CD4-positive, alpha-beta memory T cell (primary cell): ENCODE measurements at regions of chr19 and their contacts with region 1.

Region 1: DNA sequence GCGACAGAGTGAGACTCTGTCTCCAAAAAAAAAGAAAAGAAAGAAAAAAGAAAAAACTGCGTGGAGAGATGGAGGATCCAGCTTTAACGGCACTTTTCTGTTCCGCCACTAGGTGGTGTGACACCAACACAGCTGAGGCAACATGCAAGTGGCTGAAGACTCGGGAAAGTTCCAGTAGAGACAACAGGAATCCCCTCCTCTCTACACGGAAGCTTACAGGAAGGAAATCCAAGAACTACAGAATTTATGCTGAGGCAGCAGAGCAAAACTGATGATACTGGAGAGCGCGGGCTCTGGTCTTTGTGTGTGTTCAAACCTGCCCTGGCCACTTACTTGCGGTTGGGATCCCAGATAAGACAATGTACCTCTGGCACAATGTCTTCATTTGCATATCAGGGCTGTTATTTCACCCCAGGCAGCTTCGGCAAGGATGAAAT is 9.9 kb downstream of the RANBP3 start:
- DNase-seq: peak; percentile 46 to 59 (median 56)
- H3K4me3 ChIP-seq: no peak overlapping the region
- H3K4me3 Mint-ChIP-seq: peak overlapping the region in 7 of 8 donors; percentile 9 to 73 (median 26)
- H3K27ac ChIP-seq: peak overlapping the region; percentile 43
- H3K27ac Mint-ChIP-seq: peak overlapping the region; percentile 28 to 94 (median 90)
- H3K4me1 ChIP-seq: peaks cover 95% of the 10 kb centered on the region
- H3K4me1 Mint-ChIP-seq: peaks cover 52 to 94% (median 72%) of the 10 kb centered on the region in 4 donors
- H3K27me3 ChIP-seq: no peaks in the 10 kb centered on the region
- H3K27me3 Mint-ChIP-seq: no peaks in the 10 kb centered on the region

Region 2: DNA sequence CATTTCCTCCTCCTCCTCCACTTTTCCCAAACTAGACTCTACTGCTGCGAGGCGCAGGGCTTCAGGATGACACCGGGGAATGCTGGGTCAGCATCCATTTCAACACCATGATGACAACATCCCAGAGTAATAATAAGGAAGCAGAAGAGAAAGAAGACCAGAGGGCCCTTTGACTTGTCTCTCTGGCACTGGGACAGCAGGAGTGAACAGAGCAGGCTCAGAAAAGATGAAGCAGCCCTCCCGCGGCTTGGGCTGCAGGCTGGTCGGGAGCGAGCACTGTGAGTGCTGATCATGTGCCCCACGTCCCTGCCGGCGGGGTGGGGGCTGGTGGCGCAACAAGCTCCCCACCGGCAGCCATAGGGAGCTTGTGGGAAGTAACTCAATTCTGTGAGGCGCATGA is 20.6 kb before region 1 on chr19:
- CTCF ChIA-PET with region 1: interaction called, 60 read pairs
- POLR2A ChIA-PET with region 1: interaction called, 104 read pairs
- intact Hi-C with region 1: no loop called
- DNase-seq: no peak
- H3K4me3 ChIP-seq: no peak overlapping the region
- H3K4me3 Mint-ChIP-seq: peak overlapping the region in 3 of 8 donors; percentile 38 to 61 (median 40)
- H3K27ac ChIP-seq: no peak overlapping the region
- H3K27ac Mint-ChIP-seq: peak overlapping the region in 6 of 7 donors; percentile 36 to 94 (median 82)
- H3K4me1 ChIP-seq: peaks cover 63% of the 10 kb centered on the region
- H3K4me1 Mint-ChIP-seq: peaks cover 50 to 76% (median 65%) of the 10 kb centered on the region in 4 donors
- H3K27me3 ChIP-seq: no peaks in the 10 kb centered on the region
- H3K27me3 Mint-ChIP-seq: no peaks in the 10 kb centered on the region

Region 3: DNA sequence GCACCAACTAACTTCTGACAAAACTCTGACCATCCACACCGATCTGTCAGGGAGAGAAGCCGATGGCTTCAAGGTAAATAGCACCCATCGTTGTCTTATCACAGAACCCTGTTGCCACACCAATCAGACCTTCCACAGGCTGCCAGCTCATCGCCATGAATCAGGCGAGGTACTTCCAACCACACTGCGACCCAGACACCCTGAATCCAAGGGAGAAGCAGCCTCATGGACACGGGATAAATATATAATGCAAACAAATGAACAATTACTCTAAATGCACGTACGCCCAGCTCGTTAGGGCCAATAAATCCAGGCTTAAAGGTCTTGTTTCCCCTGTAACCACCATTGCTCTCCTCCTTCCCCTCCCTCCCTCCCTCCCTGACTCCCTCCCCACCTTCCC is 10.8 kb before region 1 on chr19:
- CTCF ChIA-PET with region 1: interaction called, 60 read pairs
- POLR2A ChIA-PET with region 1: interaction called, 104 read pairs
- intact Hi-C with region 1: no loop called
- DNase-seq: no peak
- H3K4me3 ChIP-seq: no peak overlapping the region
- H3K4me3 Mint-ChIP-seq: peak overlapping the region in 1 of 8 donors; percentile 5
- H3K27ac ChIP-seq: no peak overlapping the region
- H3K27ac Mint-ChIP-seq: peak overlapping the region in 5 of 7 donors; percentile 12 to 94 (median 87)
- H3K4me1 ChIP-seq: peaks cover 96% of the 10 kb centered on the region
- H3K4me1 Mint-ChIP-seq: peaks cover 53 to 95% (median 78%) of the 10 kb centered on the region in 4 donors
- H3K27me3 ChIP-seq: no peaks in the 10 kb centered on the region
- H3K27me3 Mint-ChIP-seq: no peaks in the 10 kb centered on the region

Region 4: DNA sequence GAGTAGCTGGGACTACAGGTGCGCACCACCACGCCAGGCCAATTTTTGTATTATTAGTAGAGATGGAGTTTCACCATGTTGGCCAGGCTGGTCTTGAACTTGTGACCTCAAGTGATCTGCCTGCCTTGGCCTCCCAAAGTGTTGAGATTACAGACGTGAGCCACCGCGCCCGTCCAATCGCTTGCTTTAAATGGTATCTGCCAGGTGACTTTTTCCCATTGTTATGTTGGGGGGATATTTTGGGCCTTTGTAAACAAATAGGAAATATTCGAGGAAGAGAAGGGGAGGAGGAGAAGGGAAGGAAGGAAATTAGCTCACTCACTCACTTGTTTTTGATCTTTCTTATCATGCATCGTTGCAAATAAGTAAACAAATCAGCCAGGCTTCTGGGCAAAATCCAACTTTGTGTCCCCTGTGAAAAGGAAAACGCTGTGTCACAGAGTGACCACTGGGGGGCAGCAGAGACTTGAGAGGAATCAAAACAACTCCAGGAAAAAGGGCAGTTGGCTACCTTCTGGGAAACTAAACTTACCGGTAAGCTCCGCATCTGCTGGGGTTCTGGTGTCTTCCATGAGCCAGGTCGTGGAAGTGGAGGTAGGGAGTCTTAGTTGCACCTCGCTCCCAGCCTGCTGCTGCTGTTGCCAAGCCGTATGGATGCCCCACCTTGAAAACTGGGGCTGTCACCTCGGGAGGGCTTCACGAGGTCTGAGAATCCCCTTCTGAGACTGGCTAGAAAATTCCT is 19.2 kb after region 1 on chr19:
- CTCF ChIA-PET with region 1: interaction called, 36 read pairs
- POLR2A ChIA-PET with region 1: no interaction called
- intact Hi-C with region 1: no loop called
- DNase-seq: peak; percentile 57 to 71 (median 64)
- H3K4me3 ChIP-seq: peak overlapping the region in 1 of 2 donors; percentile 55
- H3K4me3 Mint-ChIP-seq: peak overlapping the region; percentile 70 to 87 (median 78)
- H3K27ac ChIP-seq: no peak overlapping the region
- H3K27ac Mint-ChIP-seq: peak overlapping the region in 5 of 7 donors; percentile 22 to 72 (median 36)
- H3K4me1 ChIP-seq: peaks cover 28% of the 10 kb centered on the region
- H3K4me1 Mint-ChIP-seq: peaks cover 9 to 24% (median 19%) of the 10 kb centered on the region in 4 donors
- H3K27me3 ChIP-seq: no peaks in the 10 kb centered on the region
- H3K27me3 Mint-ChIP-seq: no peaks in the 10 kb centered on the region

Region 5: DNA sequence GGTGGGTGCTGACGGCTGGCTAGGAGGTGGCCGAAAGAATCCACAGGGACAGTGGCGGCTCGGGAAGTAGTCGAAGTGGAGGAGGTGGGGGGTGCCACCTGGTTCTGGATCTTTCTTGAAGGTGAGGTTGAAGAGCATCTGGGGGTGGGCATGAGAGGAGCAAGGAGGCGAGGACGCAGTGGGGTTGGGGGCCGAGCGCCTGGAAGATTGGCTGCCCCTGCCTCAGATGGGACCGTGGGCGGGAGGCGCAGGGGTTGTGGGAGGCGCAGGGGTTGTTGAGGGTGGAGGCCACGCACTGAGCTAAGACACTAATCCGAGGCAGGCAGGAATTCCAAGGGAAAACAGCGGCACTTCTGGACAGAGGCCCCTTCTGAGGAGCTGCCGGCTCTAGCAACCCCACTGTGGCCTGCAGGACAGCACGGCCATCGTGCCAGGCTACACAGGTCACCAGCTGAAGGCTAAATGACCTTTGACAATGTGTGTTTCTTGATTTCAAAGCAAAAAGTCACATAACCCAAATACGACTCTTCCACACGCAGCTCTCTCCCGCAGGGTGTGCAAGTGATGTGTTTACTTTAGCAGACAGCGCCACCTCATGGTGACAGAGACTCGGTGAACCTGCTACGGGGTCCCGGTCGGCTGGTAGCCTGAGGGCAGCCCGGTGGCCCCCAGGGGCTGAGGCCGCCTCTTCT is 54.0 kb after region 1 on chr19:
- CTCF ChIA-PET with region 1: interaction called, 32 read pairs
- POLR2A ChIA-PET with region 1: interaction called, 4 read pairs
- intact Hi-C with region 1: loop called (anchors 1 kb)
- DNase-seq: peak; percentile 64 to 78 (median 73)
- H3K4me3 ChIP-seq: no peak overlapping the region
- H3K4me3 Mint-ChIP-seq: no peak overlapping the region
- H3K27ac ChIP-seq: no peak overlapping the region
- H3K27ac Mint-ChIP-seq: peak overlapping the region in 1 of 7 donors; percentile 57
- H3K4me1 ChIP-seq: peaks cover 4% of the 10 kb centered on the region
- H3K4me1 Mint-ChIP-seq: peaks cover 0 to 7% (median under 1%) of the 10 kb centered on the region in 4 donors
- H3K27me3 ChIP-seq: no peaks in the 10 kb centered on the region
- H3K27me3 Mint-ChIP-seq: peaks cover 0 to 2% of the 10 kb centered on the region in 2 donors